Dorsolateral prefrontal cortex (tissue), 120 donors: ENCODE measurements at regions of chr10 and their contacts with region 1.

Region 1: DNA sequence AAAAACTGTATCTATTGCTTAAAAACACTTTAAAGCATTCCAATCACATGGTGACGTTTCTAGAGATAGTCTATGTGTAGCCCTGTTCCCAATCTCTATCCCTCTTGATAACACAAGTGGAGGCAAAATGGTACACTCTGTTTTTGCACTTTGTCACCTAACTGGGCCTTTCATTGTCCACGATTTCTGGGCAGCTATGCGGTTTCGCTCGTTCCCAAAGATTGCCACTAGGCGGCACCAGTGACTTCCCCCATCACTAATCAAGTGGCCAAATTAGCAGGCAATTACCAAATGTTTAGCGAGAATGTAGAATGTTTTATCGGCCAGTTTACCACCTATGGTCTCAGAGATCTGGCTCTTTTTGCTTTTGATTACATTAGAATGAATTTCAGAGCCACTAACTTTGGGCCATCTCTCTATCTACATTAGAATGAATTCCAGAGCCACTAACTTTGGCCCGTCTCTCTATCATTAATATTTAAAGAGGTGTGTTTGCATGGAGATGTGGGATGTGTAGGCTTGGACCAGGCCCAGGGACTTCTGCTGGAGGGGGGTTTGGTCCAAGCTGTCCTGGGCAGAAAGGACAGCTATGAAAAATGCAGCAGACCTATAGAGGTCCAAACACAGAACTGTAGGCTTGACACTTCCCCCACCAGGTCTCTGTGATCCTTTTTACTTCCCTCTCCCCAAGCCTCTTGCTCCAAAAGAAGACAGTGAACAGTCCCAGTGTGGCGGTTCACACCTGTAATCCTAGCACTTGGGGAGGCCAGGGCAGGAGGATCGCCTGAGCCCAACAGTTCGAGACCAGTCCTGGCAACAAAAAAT is 90.1 kb downstream of the EPC1 start:
- DNase-seq: peak in 8 of 10 donors; percentile 44 to 79 (median 66)
- H3K4me3 ChIP-seq: peak overlapping the region in 21 of 59 donors; percentile 11 to 47 (median 27)
- H3K27ac ChIP-seq: peak overlapping the region in 8 of 59 donors; percentile 11 to 66 (median 53)
- H3K27me3 ChIP-seq: no peaks in the 10 kb centered on the region
- CTCF ChIP-seq: peak; percentile 56 to 91 (median 82)

Region 2: DNA sequence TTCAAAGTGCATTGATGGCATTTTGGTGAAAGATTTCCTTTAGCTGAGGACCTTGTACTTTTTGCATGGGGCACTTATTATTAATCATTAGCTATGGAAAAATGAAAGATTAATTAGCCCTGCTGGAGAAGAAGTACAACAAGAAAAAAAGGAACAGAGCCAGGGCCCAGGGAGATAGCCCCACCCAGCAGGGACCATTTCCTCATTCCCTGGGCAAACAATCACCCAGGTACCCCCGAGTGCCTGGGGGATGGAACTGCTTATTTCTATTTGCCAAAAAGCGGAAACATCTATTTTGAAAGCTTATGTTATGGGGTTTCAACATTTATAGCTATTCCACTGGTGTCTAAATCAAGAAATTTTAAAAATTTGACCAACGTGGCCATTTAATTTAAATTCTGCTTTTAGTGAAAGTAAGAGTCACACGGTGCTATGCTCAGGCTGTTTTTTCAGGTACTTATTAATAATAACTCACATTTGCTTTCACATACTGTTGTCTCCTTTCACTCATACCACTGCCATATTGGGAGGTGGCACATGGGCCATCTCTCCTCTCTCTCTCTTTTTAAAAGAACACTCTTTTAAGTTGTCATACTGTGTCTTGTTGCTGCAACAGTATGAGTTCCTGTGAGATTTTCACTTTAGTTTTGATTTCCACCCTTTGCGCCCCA is 57.0 kb before region 1 on chr10:
- intact Hi-C with region 1: loop called in 1 of 2 experiments (anchors 5 kb)
- DNase-seq: no peak
- H3K4me3 ChIP-seq: no peak overlapping the region
- H3K27ac ChIP-seq: no peak overlapping the region
- H3K27me3 ChIP-seq: no peaks in the 10 kb centered on the region
- CTCF ChIP-seq: no peak

Region 3: DNA sequence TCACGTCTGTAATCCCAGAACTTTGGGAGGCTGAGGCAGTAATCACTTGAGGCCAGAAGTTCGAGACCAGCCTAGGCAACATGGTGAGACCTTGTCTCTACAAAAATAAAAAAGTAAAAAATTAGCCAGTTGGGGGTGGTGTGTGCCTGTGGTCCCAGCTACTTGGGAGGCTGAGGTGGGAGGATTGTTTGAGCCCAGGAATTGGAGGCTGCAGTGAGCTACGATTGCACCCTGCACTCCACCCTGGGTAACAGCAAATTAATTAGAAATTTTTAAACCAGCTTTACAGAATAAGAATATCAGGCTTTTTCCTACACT is 45.8 kb before region 1 on chr10:
- intact Hi-C with region 1: no loop called
- DNase-seq: no peak
- H3K4me3 ChIP-seq: no peak overlapping the region
- H3K27ac ChIP-seq: no peak overlapping the region
- H3K27me3 ChIP-seq: peaks cover 0 to 8% (median 0%) of the 10 kb centered on the region in 45 donors
- CTCF ChIP-seq: peak in 5 of 56 donors; percentile 2 to 18 (median 6)

Region 4: DNA sequence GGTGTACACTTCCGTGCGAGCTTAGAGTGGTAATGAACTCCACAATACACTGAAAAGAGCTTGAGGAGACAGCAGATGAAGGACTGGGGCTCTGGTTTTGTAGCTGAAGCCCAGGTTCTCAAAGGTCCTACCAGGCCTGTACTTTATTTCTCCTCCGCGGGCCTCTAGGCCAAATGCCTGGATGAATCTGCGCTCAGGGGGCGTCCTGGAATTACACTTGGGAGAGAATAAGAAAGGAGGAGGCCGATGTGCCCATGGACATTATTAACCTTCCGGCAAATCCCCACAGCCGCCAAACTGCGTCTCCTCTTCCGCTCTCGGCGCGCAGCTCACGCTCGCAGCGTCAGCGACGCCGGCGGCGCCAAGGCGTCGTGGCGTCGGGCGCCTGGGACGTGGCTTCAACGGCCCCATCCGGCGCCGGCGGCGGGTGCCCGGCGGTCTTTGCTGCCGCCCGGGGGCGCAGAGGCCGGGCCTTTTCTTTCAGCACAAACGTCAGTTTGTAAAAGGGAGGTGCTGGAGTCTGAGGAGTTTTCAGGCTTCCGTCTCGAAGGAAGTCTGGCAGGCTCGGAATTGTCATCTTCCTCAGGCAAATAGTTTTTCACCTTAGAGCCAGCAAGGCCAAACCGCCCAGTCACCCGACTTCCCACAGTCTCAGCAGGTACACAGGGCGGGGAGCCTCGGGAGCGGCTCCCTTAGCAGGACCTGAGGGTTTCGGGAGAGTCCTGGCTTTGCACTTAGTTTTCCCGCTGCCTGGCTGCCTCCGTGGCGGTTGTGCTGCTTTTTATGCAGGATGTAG is 189.1 kb after region 1 on chr10 and contains the start of gene CCDC7:
- intact Hi-C with region 1: loop called in 1 of 2 experiments (anchors 10 kb)
- DNase-seq: peak; percentile 52 to 89 (median 74)
- H3K4me3 ChIP-seq: peak within 1 kb of the TSS; percentile 59 to 94 (median 84)
- H3K27ac ChIP-seq: peak within 1 kb of the TSS; percentile 66 to 99 (median 96)
- H3K27me3 ChIP-seq: no peaks in the 10 kb centered on the region
- CTCF ChIP-seq: peak; percentile 13 to 78 (median 59)
- total RNA-seq, gene CCDC7: 53.8 to 143 (median 87.0) TPM